Activated CD4-positive, alpha-beta T cell treated with anti-CD3 and anti-CD28 coated beads for 36 hours (primary cell): ENCODE measurements at regions of chr6 and their contacts with region 1.

Region 1: DNA sequence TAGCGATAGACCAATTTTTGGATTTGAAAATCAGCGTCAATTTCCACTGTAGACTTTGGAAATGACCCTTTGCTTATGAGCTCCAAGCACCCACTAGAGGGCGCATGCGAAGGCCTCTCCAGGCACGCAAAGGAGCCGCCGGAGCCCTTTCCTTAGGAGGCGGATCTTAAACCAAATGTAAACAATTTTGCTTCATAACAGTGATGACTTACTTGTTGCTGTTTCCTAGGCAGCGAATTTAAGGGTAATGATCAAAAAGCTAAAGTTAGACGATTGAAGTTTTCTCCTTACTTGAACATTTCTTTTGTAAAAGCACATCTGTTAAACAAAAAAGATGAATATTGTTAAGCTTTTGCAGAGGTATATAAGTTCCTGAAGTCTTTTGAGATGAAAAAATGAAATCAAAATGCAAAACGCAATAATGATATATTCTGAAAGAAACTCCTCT is 29.2 kb upstream of the EXOC2 start:
- DNase-seq: peak; percentile 90
- ATAC-seq: peak; percentile 93
- H3K4me3 Mint-ChIP-seq: no peak overlapping the region
- H3K27ac Mint-ChIP-seq: no peak overlapping the region
- H3K4me1 Mint-ChIP-seq: no peaks in the 10 kb centered on the region
- H3K27me3 Mint-ChIP-seq: peaks cover 18% of the 10 kb centered on the region

Region 2: DNA sequence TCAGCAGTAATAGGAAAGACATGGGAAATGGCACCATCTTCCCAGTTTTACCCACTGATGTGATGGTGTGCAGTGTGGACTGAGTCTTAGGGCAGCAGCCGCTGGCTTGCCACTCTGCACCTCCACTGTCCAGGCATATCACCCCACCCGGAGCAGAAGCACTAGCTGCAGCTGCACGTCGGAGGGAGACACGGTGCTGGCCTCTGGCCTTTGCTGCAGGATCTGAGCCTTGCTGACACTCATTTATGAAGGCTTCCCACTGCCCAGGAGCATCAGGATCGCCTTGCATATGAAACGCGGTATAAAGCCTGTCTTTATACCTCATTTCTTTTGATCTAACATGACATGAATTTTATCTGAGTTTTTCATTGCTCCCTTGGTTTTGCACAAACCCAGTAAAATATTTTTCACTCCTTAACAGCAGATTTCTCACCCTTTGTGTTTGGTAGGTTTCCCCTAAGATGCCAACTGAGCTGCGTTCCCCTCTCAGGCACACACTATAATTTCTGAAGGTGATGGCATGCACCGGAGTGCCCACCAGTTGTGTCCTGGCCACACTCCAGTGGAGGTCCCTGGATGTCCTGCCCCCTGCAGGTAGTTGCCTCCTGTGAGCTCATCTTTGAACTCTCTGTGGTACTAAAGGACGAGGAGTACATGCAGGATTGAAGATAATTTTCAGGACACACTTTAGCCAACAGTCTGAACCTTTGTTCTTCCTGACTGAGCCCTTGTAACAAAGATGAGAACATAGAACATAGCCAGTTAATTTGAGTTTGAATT is 20.2 kb before region 1 on chr6:
- CTCF ChIA-PET with region 1: interaction called, 15 read pairs
- POLR2A ChIA-PET with region 1: no interaction called
- intact Hi-C with region 1: no loop called
- DNase-seq: no peak
- ATAC-seq: no peak
- H3K4me3 Mint-ChIP-seq: no peak overlapping the region
- H3K27ac Mint-ChIP-seq: no peak overlapping the region
- H3K4me1 Mint-ChIP-seq: peaks cover 2% of the 10 kb centered on the region
- H3K27me3 Mint-ChIP-seq: peaks cover 8% of the 10 kb centered on the region

Region 3: GRCh38 chr6:741410-742339 is 19.6 kb after region 1 on chr6:
- CTCF ChIA-PET with region 1: interaction called, 18 read pairs
- POLR2A ChIA-PET with region 1: no interaction called
- intact Hi-C with region 1: no loop called
- DNase-seq: peak; percentile 16
- ATAC-seq: peak; percentile 85
- H3K4me3 Mint-ChIP-seq: no peak overlapping the region
- H3K27ac Mint-ChIP-seq: peak overlapping the region; percentile 53
- H3K4me1 Mint-ChIP-seq: peaks cover 8% of the 10 kb centered on the region
- H3K27me3 Mint-ChIP-seq: peaks cover 8% of the 10 kb centered on the region

Region 4: GRCh38 chr6:1381481-1382330 is 659.6 kb after region 1 on chr6:
- CTCF ChIA-PET with region 1: interaction called, 3 read pairs
- POLR2A ChIA-PET with region 1: no interaction called
- intact Hi-C with region 1: loop called in 1 of 2 experiments (anchors 5 kb)
- DNase-seq: peak; percentile 77
- ATAC-seq: peak; percentile 75
- H3K4me3 Mint-ChIP-seq: peak overlapping the region; percentile 10
- H3K27ac Mint-ChIP-seq: no peak overlapping the region
- H3K4me1 Mint-ChIP-seq: peaks cover 38% of the 10 kb centered on the region
- H3K27me3 Mint-ChIP-seq: peaks cover 68% of the 10 kb centered on the region

Region 5: GRCh38 chr6:1436334-1437306 is 714.5 kb after region 1 on chr6:
- CTCF ChIA-PET with region 1: no interaction called
- POLR2A ChIA-PET with region 1: no interaction called
- intact Hi-C with region 1: loop called in 1 of 2 experiments (anchors 1 kb)
- DNase-seq: peak; percentile 61
- ATAC-seq: peak; percentile 78
- H3K4me3 Mint-ChIP-seq: no peak overlapping the region
- H3K27ac Mint-ChIP-seq: no peak overlapping the region
- H3K4me1 Mint-ChIP-seq: peaks cover 4% of the 10 kb centered on the region
- H3K27me3 Mint-ChIP-seq: peaks cover 34% of the 10 kb centered on the region